Adrenal gland (tissue), 19 donors: ENCODE measurements at regions of chr3 and their contacts with region 1.

Region 1: DNA sequence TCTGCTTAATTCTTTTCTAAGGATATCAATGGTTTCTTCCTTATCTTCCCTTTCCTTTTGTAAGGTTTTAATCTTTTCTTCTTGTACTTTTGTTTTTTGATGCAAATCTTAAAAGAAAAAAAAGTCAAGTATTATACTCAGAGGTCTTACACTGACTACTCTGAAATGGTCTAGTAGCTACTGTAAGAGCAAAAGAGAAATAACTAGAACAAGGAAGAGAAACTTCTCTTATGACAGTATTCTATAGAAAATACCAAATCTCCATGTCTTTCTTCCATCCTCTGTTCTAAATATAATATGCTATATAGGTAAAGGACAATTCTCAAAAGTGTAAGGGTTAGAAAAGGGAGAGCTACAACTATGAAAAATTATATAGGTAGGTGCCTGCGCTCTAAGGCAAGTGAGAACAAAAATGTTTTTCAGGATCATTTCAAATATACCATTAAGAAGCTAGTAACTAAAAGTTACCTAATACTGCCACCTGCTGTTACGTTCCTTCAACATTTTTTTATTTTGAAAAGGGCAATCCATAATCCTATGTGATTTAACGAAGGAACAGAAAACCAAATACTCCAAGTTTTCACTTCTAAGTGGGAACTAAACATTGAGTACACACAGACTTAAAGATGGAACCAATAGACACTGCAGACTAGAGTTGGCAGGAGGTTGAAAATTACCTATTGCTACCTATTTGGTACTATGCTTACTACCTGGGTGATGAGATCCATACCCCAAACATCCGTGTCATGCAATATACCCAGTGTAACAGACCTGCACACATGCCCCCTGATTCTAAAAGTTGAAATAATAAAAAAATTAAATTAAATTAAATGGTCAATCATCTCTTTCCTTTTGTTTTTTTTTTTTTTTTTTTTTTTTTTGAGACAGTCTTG is 36.7 kb downstream of the CIP2A start:
- DNase-seq: peak in 1 of 7 donors; percentile 24
- H3K4me3 ChIP-seq: no peak overlapping the region
- H3K27ac ChIP-seq: no peak overlapping the region
- H3K4me1 ChIP-seq: peaks cover 0 to 3% of the 10 kb centered on the region in 2 donors
- H3K27me3 ChIP-seq: no peaks in the 10 kb centered on the region
- CTCF ChIP-seq: peak; percentile 33 to 71 (median 56)
- POLR2A ChIP-seq: no peak

Region 2: DNA sequence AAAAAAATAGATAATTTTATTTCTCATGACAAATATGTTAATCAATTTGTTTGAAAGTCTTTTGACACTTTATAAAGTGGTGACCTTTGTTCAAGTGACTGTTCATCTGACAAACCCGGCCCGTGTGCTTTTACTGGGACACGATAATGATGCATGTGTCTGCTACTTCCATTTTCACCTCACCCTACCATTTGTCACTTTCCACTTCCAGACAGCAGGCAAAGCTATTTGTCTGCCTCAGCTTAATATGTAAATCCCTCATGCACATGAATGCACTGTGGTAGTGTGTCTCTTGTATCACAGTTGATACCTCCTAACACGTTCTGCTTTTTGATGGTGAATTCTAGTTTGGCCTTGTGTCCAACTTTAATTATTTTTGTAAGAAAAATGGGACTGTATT is 825.4 kb before region 1 on chr3:
- intact Hi-C with region 1: no loop called
- DNase-seq: no peak
- H3K4me3 ChIP-seq: no peak overlapping the region
- H3K27ac ChIP-seq: no peak overlapping the region
- H3K4me1 ChIP-seq: no peaks in the 10 kb centered on the region
- H3K27me3 ChIP-seq: no peaks in the 10 kb centered on the region
- CTCF ChIP-seq: no peak
- POLR2A ChIP-seq: no peak

Region 3: DNA sequence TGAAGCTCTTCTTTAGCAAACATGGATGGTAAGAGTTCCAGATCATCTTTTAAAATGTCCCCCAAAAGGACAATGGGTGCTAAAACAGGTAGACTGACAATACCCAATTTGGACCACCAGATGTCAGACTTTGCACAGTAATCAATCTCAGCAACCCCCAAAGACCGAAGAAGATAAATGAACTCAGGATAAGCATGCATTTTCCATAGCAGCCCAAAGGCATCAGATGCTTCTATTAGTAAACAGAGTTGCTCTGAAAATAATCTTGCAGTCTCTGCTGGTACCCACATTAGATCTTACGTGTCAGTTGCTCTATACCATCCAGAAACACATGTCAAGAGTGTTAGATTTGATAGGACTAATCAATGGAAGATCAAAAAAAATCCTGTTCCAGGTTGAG is 62.7 kb before region 1 on chr3:
- intact Hi-C with region 1: loop called (anchors 2 kb)
- DNase-seq: peak in 5 of 7 donors; percentile 17 to 48 (median 40)
- H3K4me3 ChIP-seq: no peak overlapping the region
- H3K27ac ChIP-seq: no peak overlapping the region
- H3K4me1 ChIP-seq: peaks cover 0 to 11% of the 10 kb centered on the region in 2 donors
- H3K27me3 ChIP-seq: no peaks in the 10 kb centered on the region
- CTCF ChIP-seq: peak; percentile 53 to 93 (median 81)
- POLR2A ChIP-seq: no peak

Region 4: GRCh38 chr3:108645364-108645763 is 92.9 kb after region 1 on chr3:
- intact Hi-C with region 1: no loop called
- DNase-seq: no peak
- H3K4me3 ChIP-seq: no peak overlapping the region
- H3K27ac ChIP-seq: no peak overlapping the region
- H3K4me1 ChIP-seq: no peaks in the 10 kb centered on the region
- H3K27me3 ChIP-seq: no peaks in the 10 kb centered on the region
- CTCF ChIP-seq: no peak
- POLR2A ChIP-seq: no peak